Prostate gland (tissue), 2 donors: ENCODE measurements at regions of chr3 and their contacts with region 1.

Region 1: GRCh38 chr3:187745201-187746058 is at the start of gene BCL6:
- DNase-seq: peak; percentile 94
- H3K4me3 ChIP-seq: peak within 1 kb of the TSS; percentile 68 to 83
- H3K27ac ChIP-seq: peak within 1 kb of the TSS; percentile 96 to 97
- H3K4me1 ChIP-seq: peaks cover 11% of the 10 kb centered on the region
- H3K27me3 ChIP-seq: no peaks in the 10 kb centered on the region
- CTCF ChIP-seq: peak in 3 of 4 experiments; percentile 10 to 29 (median 13)
- POLR2A ChIP-seq: peak; percentile 96
- total RNA-seq, gene BCL6: 50.1 to 105 TPM

Region 2: DNA sequence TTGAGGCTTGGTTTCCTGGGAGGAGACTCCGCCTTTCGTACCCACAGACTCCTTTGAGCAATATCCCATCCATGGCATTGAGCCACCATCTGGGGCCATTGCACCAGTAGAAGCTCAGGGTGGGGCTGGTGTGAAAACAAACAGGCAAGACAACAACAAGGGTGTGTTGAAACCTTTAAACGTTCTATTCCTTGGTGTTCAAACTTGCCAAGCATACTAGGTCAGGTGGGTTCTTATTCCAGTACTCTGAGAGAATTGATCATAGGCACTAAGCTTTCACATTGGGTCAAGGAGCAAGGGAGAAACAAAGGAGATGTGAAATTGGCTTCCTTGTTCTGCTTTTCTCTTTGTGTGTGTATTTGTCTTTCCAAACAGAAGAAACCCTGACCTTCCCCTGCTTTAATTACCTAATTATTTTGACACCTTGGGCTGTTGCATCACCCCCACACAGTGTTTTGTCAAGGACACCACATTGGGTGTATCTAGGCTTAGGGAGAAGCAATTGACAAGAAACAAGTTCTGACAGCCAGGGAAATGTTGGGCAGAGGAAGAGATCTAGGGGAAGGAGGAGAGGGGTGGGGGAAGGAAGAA is 105.0 kb after region 1 on chr3:
- intact Hi-C with region 1: loop called (anchors 10 kb)
- DNase-seq: no peak
- H3K4me3 ChIP-seq: no peak overlapping the region
- H3K27ac ChIP-seq: no peak overlapping the region
- H3K4me1 ChIP-seq: no peaks in the 10 kb centered on the region
- H3K27me3 ChIP-seq: no peaks in the 10 kb centered on the region
- CTCF ChIP-seq: no peak
- POLR2A ChIP-seq: no peak

Region 3: GRCh38 chr3:188154014-188154808 is 408.8 kb after region 1 on chr3 and contains the start of gene LPP:
- intact Hi-C with region 1: loop called (anchors 2 kb)
- DNase-seq: peak; percentile 73
- H3K4me3 ChIP-seq: peak within 1 kb of the TSS; percentile 59 to 81
- H3K27ac ChIP-seq: peak within 1 kb of the TSS; percentile 91 to 93
- H3K4me1 ChIP-seq: peaks cover 11% of the 10 kb centered on the region
- H3K27me3 ChIP-seq: no peaks in the 10 kb centered on the region
- CTCF ChIP-seq: peak in 1 of 4 experiments; percentile 10
- POLR2A ChIP-seq: peak; percentile 14
- total RNA-seq, gene LPP: 219 to 248 TPM

Region 4: DNA sequence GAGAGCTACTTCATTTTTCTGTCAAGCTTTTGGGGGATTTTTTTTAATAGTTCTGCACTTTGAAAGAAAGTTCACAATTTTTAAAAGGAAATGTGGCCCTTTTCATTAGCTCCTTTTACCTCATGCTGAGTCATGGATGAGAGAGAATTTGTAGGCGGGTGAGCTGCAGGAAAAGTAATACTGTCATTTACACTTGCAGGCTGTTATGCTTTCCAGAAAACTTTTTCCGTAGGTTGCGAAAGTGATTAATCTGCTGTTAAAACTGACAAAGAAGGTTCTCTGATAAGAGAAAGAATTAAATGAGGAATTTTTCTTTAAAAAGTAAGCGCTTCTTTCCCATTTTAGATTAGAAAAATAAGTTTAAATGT is 838.7 kb after region 1 on chr3:
- intact Hi-C with region 1: loop called (anchors 10 kb)
- DNase-seq: no peak
- H3K4me3 ChIP-seq: no peak overlapping the region
- H3K27ac ChIP-seq: no peak overlapping the region
- H3K4me1 ChIP-seq: peaks cover 5% of the 10 kb centered on the region
- H3K27me3 ChIP-seq: no peaks in the 10 kb centered on the region
- CTCF ChIP-seq: no peak
- POLR2A ChIP-seq: no peak

Region 5: DNA sequence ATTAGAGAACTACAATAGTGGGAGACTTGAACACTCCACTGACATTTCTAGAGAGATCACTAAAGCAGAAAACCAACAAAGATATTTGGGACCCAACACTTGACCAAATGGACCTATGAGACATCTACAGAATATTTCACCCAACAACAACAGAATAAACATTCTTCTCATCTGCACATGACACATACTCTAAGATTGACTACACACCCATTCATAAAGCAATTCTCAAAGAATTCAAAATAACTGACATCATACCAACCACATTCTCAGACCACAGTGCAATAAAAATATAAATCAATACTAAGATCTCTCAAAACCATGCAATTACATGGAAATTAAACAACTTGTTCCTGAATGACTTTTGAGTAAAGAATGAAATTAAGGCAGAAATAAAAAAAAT is 882.2 kb after region 1 on chr3:
- intact Hi-C with region 1: loop called (anchors 10 kb)
- DNase-seq: no peak
- H3K4me3 ChIP-seq: no peak overlapping the region
- H3K27ac ChIP-seq: no peak overlapping the region
- H3K4me1 ChIP-seq: no peaks in the 10 kb centered on the region
- H3K27me3 ChIP-seq: no peaks in the 10 kb centered on the region
- CTCF ChIP-seq: no peak
- POLR2A ChIP-seq: no peak

Region 6: GRCh38 chr3:188760408-188760807 is 1015.0 kb after region 1 on chr3:
- intact Hi-C with region 1: loop called (anchors 10 kb)
- DNase-seq: no peak
- H3K4me3 ChIP-seq: no peak overlapping the region
- H3K27ac ChIP-seq: no peak overlapping the region
- H3K4me1 ChIP-seq: no peaks in the 10 kb centered on the region
- H3K27me3 ChIP-seq: no peaks in the 10 kb centered on the region
- CTCF ChIP-seq: no peak
- POLR2A ChIP-seq: no peak